PC-3 (cell line): ENCODE measurements at regions of chr9 and their contacts with region 1.

Region 1: GRCh38 chr9:81492710-81493447 is 196.5 kb downstream of the TLE1 start:
- DNase-seq: peak; percentile 90
- ATAC-seq: peak; percentile 83
- H3K4me3 ChIP-seq: no peak overlapping the region
- H3K27ac ChIP-seq: peak overlapping the region; percentile 90
- H3K4me1 ChIP-seq: peaks cover 40% of the 10 kb centered on the region
- H3K27me3 ChIP-seq: no peaks in the 10 kb centered on the region
- CTCF ChIP-seq: no peak

Region 2: GRCh38 chr9:81146656-81147337 is 346.1 kb before region 1 on chr9:
- CTCF ChIA-PET with region 1: no interaction called
- POLR2A ChIA-PET with region 1: no interaction called
- intact Hi-C with region 1: loop called (anchors 5 kb)
- DNase-seq: peak; percentile 85
- ATAC-seq: peak; percentile 88
- H3K4me3 ChIP-seq: 0 out of 2 replicates have a peak overlapping the region, but pooled peaks have one; percentile 12
- H3K27ac ChIP-seq: peak overlapping the region; percentile 82
- H3K4me1 ChIP-seq: peaks cover 40% of the 10 kb centered on the region
- H3K27me3 ChIP-seq: no peaks in the 10 kb centered on the region
- CTCF ChIP-seq: no peak

Region 3: DNA sequence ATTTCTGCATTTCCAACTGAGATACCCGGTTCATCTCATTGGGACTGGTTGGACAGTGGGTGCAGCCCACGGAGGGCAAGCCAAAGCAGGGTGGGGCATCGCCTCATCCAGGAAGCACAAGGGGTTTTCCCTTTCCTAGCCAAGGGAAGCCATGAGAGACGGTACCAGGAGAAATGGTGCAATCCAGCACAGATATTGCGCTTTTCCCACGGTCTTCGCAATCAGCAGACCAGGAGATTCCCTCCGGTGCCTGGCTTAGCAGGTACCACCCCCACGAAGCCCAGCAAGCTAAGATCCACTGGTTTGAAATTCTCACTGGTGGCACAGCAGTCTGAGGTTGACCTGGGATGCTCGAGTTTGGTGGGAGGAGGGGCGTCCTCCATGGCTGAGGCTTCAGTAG is 330.5 kb before region 1 on chr9:
- CTCF ChIA-PET with region 1: no interaction called
- POLR2A ChIA-PET with region 1: no interaction called
- intact Hi-C with region 1: no loop called
- DNase-seq: no peak
- ATAC-seq: no peak
- H3K4me3 ChIP-seq: no peak overlapping the region
- H3K27ac ChIP-seq: no peak overlapping the region
- H3K4me1 ChIP-seq: no peaks in the 10 kb centered on the region
- H3K27me3 ChIP-seq: no peaks in the 10 kb centered on the region
- CTCF ChIP-seq: no peak

Region 4: DNA sequence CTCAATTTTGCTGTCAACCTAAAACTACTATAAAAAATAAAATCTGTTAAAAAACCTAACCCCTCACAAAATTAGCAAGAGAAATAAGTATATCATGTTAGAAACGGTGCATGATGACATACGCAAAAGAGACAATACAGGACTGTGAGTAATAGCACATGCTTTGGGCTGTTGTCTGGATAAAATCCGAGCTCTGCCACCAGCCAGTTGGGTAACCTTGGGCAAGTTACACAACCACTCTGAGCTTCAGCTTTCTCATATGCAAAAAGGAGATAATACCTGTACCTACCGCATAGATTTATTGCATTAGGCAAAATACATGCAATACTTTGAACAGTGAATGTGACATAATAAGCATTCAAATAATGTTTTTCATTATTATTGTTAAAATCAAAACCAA is 285.2 kb before region 1 on chr9:
- CTCF ChIA-PET with region 1: no interaction called
- POLR2A ChIA-PET with region 1: no interaction called
- intact Hi-C with region 1: no loop called
- DNase-seq: no peak
- ATAC-seq: no peak
- H3K4me3 ChIP-seq: no peak overlapping the region
- H3K27ac ChIP-seq: no peak overlapping the region
- H3K4me1 ChIP-seq: no peaks in the 10 kb centered on the region; the same call in 1 of the 2 replicates
- H3K27me3 ChIP-seq: no peaks in the 10 kb centered on the region
- CTCF ChIP-seq: no peak

Region 5: GRCh38 chr9:81394881-81395675 is 97.8 kb before region 1 on chr9:
- CTCF ChIA-PET with region 1: no interaction called
- POLR2A ChIA-PET with region 1: no interaction called
- intact Hi-C with region 1: loop called (anchors 5 kb)
- DNase-seq: no peak
- ATAC-seq: no peak
- H3K4me3 ChIP-seq: no peak overlapping the region
- H3K27ac ChIP-seq: no peak overlapping the region
- H3K4me1 ChIP-seq: peaks cover 18% of the 10 kb centered on the region
- H3K27me3 ChIP-seq: no peaks in the 10 kb centered on the region
- CTCF ChIP-seq: no peak

Region 6: GRCh38 chr9:81456431-81457006 is 36.4 kb before region 1 on chr9:
- CTCF ChIA-PET with region 1: no interaction called
- POLR2A ChIA-PET with region 1: no interaction called
- intact Hi-C with region 1: no loop called
- DNase-seq: peak; percentile 38
- ATAC-seq: no peak; the same call in 1 of the 2 replicates
- H3K4me3 ChIP-seq: no peak overlapping the region
- H3K27ac ChIP-seq: no peak overlapping the region
- H3K4me1 ChIP-seq: peaks cover 11% of the 10 kb centered on the region
- H3K27me3 ChIP-seq: no peaks in the 10 kb centered on the region
- CTCF ChIP-seq: no peak

Region 7: DNA sequence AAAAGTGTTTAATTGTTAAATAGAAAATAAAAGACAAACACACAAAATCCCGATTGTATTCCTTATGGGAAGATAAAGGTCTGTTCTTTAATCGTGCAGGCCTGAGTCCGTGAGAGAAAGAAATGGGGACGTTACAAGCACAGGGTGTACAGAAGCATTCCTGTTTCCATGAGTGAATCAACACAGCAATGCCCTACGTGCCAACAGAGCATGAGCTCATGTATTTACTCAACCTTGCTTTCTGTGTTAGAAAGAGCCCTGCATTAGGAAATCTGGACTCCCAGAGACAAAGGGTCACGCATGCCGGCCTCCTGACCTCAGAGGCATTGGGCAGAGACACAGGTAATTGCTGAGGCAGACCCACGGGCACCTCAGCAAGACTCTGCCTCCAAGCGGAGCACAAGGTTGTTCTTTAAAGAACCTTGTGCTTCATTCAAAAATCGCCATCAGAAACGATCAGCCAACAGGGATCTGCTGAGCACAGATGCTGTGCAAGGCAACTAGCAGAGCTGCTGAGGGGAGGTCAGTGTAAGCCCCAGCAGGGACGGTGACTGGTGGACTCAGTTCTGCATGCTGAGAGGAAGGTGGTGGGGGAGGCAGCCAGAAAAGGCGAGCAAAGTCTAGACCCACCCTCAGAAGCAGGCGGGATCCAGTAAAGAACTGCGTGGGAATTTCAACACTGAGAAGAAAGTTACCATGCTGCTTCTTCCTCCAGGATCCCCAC is 95.4 kb after region 1 on chr9:
- CTCF ChIA-PET with region 1: interaction called, 4 read pairs
- POLR2A ChIA-PET with region 1: no interaction called
- intact Hi-C with region 1: loop called (anchors 5 kb)
- DNase-seq: peak; percentile 82
- ATAC-seq: peak; percentile 92
- H3K4me3 ChIP-seq: peak overlapping the region; percentile 48; the same call in 1 of the 2 replicates
- H3K27ac ChIP-seq: peak overlapping the region; percentile 91
- H3K4me1 ChIP-seq: peaks cover 29% of the 10 kb centered on the region
- H3K27me3 ChIP-seq: no peaks in the 10 kb centered on the region
- CTCF ChIP-seq: no peak

Region 8: GRCh38 chr9:81598811-81599210 is 105.9 kb after region 1 on chr9:
- CTCF ChIA-PET with region 1: no interaction called
- POLR2A ChIA-PET with region 1: no interaction called
- intact Hi-C with region 1: no loop called
- DNase-seq: no peak
- ATAC-seq: no peak
- H3K4me3 ChIP-seq: no peak overlapping the region
- H3K27ac ChIP-seq: no peak overlapping the region
- H3K4me1 ChIP-seq: peaks cover 28% of the 10 kb centered on the region
- H3K27me3 ChIP-seq: no peaks in the 10 kb centered on the region
- CTCF ChIP-seq: no peak